Mammary epithelial cell (primary cell): ENCODE measurements at regions of chrX and their contacts with region 1.

Region 1: DNA sequence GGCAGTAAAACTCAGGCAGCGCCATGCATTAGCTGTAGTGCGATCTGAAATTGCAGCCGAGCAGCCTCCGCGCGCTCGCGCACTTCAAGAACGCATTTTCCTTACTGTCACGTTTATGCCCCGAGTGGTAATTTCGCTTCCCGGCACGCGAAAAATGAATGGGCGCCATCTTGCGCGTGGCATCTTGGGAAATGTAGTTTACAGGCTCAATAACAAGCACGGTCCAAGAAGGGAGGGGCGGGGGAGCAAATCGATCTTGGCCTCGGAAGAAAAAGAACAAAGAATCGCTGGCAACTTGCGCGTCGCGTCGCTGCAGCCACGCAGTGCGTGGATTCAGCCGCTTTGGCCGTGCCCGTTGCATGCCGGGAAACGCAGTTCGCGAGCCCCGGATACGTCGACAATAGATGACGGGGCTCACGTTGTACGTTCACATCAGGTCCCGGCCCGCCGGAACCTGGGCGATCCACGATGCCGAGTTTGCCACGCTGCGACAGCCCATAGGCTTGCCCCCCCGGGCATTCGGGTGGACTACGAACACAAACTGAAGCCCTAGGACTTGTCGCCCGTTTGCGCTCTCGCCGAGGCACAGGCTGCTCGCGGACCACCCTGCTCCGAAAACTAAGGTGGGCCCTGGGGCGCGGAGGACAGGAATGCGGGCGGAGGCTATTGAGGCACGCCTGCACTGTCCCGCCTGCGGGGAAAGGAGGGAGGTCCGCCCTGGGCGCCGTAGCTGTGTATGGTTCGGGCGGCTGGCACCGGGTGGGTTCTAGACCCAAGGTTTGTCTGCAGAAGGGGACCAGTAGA is at the start of gene FTSJ1:
- DNase-seq: peak; percentile 87
- H3K4me3 ChIP-seq: peak within 1 kb of the TSS; percentile 62 to 73 (median 67)
- H3K27ac ChIP-seq: peak within 1 kb of the TSS; percentile 89
- H3K4me1 ChIP-seq: peaks cover 5% of the 10 kb centered on the region
- H3K27me3 ChIP-seq: no peaks in the 10 kb centered on the region
- CTCF ChIP-seq: no peak
- total RNA-seq, gene FTSJ1: 112 to 126 TPM

Region 2: GRCh38 chrX:48083212-48083611 is 392.8 kb before region 1 on chrX:
- CTCF ChIA-PET with region 1: interaction called, 3 read pairs
- dilution Hi-C with region 1: no loop called
- in situ Hi-C with region 1: no loop called
- intact Hi-C with region 1: loop called (anchors 1 kb)
- DNase-seq: peak; percentile 35
- H3K4me3 ChIP-seq: no peak overlapping the region
- H3K27ac ChIP-seq: no peak overlapping the region
- H3K4me1 ChIP-seq: peaks cover 9% of the 10 kb centered on the region
- H3K27me3 ChIP-seq: no peaks in the 10 kb centered on the region
- CTCF ChIP-seq: peak; percentile 53 to 63

Region 3: DNA sequence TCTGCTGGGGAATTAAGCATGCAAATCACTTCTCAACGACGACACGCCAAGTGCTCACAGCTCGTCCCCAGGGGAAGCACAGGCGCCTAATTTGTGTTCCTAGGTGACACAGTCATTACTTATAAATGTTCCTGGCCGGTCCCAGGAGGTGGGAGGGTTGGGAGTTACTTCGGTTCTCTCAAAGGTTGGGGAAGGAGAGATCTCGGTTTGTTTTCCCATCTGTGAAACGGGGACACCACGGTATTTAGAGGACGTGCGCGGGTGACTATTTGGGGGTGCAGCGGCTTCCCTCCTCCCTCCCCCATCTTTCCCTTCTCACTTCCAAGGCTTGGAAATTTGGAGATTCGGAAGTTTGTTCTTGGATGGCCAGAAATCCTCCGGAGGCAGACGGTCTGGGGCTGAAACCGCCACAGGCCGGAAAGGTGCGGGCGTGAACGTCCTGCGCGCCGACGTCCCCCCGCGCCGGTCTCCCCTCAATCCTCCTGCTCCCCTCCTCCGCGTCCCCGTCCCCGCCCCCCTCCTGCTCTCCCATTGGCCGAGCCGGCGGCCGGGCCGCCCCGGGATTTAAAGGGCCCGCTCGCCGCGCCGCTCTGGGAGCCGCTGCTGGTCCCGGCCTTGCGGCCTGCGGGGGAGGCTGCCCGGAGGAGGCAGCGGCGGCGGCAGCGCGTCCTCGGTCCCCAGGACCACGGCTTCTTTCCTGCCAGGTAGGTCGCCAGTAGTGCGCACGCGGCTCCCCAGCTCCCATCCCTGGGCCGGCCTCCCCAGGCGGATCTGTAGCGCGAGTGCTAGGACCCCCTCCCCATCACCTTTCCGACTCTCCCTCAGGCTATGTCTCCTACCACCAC is 32.6 kb after region 1 on chrX and contains the start of gene PORCN:
- CTCF ChIA-PET with region 1: no interaction called
- dilution Hi-C with region 1: no loop called
- in situ Hi-C with region 1: no loop called
- intact Hi-C with region 1: loop called (anchors 1 kb)
- DNase-seq: peak; percentile 67
- H3K4me3 ChIP-seq: peak within 1 kb of the TSS; percentile 53 to 83 (median 63)
- H3K27ac ChIP-seq: peak within 1 kb of the TSS; percentile 53
- H3K4me1 ChIP-seq: peaks cover 16% of the 10 kb centered on the region
- H3K27me3 ChIP-seq: no peaks in the 10 kb centered on the region
- CTCF ChIP-seq: no peak
- total RNA-seq, gene PORCN: 36.2 to 113 TPM